Motor neuron (in vitro differentiated cells): ENCODE measurements at regions of chr5 and their contacts with region 1.

Region 1: DNA sequence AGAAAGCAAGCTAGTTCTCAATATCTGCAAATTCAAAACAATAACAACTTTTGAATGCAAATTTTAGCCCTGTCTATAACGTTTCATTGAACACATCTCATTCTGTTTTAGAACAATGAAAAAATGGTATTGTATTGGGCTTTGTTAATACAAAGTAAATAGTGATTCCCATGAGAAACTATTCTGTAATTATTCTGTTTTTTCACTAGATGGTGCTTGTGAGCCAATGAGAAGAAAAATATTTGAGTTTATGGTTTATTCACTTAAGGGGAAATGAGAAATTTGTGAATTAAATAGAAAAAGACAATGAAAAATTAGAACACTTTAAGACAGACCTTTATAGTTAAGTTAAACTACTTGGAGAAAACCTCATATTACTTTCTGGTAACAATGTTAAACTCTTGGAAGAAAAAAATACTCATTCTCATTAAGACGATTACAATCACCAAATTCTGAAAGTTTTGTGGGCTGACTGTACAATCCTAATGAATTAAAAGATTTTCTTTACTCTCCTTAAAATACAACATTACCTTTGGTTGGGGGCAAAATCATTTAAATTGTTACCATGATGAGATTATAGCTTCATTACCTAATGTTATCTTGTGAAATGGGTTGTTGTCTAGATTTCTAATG is 127.0 kb downstream of the NNT start:
- ATAC-seq: no peak
- H3K4me3 ChIP-seq: no peak overlapping the region
- H3K27ac ChIP-seq: no peak overlapping the region
- H3K4me1 ChIP-seq: no peaks in the 10 kb centered on the region

Region 2: DNA sequence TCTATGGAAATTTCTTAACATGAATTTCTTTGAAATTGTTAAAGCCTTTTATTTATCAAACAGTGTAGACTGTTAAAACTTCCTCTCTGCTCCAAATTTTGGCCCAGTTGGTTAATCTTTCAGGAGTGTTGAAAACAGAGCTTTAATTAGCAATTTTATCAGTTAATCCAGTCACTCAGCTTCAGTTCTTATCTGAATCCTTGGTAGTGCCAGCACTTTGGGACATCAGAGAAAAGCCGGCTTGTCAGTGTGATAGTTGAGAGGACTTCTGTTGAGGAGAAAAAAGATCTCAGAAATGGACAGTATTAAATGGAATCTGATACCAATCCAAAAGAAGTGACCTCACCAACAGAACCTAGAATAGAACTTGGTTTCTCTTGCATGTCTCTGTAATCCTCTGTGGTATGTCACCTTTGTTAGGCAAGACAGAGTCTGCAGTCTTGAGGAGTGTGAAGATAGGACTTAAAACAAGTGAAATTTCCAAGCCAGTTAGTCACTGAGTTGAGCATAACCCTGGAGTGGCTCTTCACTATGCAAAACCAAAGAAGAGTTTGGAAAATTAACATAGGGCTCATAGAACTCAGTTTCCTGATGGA is 124.8 kb after region 1 on chr5:
- in situ Hi-C with region 1: no loop called
- ATAC-seq: peak in 2 of 8 experiments; percentile 26 to 38
- H3K4me3 ChIP-seq: no peak overlapping the region
- H3K27ac ChIP-seq: no peak overlapping the region
- H3K4me1 ChIP-seq: peaks cover 0 to 3% of the 10 kb centered on the region in 2 donors

Region 3: GRCh38 chr5:43993634-43994351 is 263.8 kb after region 1 on chr5:
- in situ Hi-C with region 1: no loop called
- ATAC-seq: no peak
- H3K4me3 ChIP-seq: no peak overlapping the region
- H3K27ac ChIP-seq: no peak overlapping the region
- H3K4me1 ChIP-seq: no peaks in the 10 kb centered on the region

Region 4: GRCh38 chr5:44774279-44774880 is 1044.4 kb after region 1 on chr5:
- in situ Hi-C with region 1: loop called in 2 of 9 experiments (anchors 25 kb)
- ATAC-seq: peak in 4 of 8 experiments; percentile 28 to 65 (median 50)
- H3K4me3 ChIP-seq: no peak overlapping the region
- H3K27ac ChIP-seq: no peak overlapping the region
- H3K4me1 ChIP-seq: peaks cover 0 to 2% of the 10 kb centered on the region in 2 donors

Region 5: GRCh38 chr5:44797841-44798240 is 1067.9 kb after region 1 on chr5:
- in situ Hi-C with region 1: loop called in 1 of 9 experiments (anchors 25 kb)
- ATAC-seq: peak in 2 of 8 experiments; percentile 87 to 90
- H3K4me3 ChIP-seq: no peak overlapping the region
- H3K27ac ChIP-seq: no peak overlapping the region
- H3K4me1 ChIP-seq: no peaks in the 10 kb centered on the region